ENCODE measurements at regions of chr5 and their contacts with region 1.

Region 1: GRCh38 chr5:132293066-132293991 is 865 bp upstream of the SLC22A4 start:
- DNase-seq: peak; percentile 92
- ATAC-seq: peak; percentile 54
- H3K4me3 Mint-ChIP-seq: peak overlapping the region; percentile 87
- H3K27ac Mint-ChIP-seq: peak overlapping the region; percentile 95
- H3K4me1 Mint-ChIP-seq: peaks cover 21% of the 10 kb centered on the region
- H3K27me3 Mint-ChIP-seq: peaks cover 8% of the 10 kb centered on the region
- CTCF ChIP-seq: no peak

Region 2: DNA sequence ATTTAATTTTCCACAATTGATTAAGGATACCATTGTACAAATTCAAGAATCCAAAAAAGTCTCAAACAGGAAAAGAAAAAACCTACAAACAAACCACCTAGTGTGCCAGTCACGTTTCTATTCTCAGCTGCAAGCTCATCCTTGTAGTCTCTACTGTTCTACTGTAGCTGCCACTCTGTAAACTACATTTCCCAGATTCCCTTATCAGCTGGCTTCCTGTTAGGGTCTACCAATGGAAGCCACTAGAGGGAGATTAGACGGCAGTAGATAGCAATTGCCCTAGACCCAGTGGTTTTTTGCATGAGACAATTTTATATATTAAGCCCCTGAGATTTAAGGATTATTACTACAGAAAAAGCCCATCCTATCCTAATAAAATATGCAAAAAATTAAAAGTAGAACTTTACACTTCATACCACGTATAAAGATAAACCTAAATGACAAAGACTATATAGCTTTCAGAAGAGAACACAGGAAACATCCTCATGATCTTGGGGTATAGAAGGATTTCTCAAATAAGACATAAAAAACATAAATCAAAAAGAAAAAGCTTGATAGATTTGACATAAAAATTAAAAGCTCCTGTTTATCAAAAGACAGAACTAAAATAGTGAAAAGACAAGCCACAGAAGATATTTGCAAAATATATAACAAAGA is 103.0 kb before region 1 on chr5:
- CTCF ChIA-PET with region 1: interaction called, 10 read pairs
- POLR2A ChIA-PET with region 1: no interaction called
- intact Hi-C with region 1: no loop called
- DNase-seq: no peak
- ATAC-seq: peak; percentile 99
- H3K4me3 Mint-ChIP-seq: no peak overlapping the region
- H3K27ac Mint-ChIP-seq: no peak overlapping the region
- H3K4me1 Mint-ChIP-seq: peaks cover 3% of the 10 kb centered on the region
- H3K27me3 Mint-ChIP-seq: peaks cover 6% of the 10 kb centered on the region
- CTCF ChIP-seq: peak; percentile 69

Region 3: DNA sequence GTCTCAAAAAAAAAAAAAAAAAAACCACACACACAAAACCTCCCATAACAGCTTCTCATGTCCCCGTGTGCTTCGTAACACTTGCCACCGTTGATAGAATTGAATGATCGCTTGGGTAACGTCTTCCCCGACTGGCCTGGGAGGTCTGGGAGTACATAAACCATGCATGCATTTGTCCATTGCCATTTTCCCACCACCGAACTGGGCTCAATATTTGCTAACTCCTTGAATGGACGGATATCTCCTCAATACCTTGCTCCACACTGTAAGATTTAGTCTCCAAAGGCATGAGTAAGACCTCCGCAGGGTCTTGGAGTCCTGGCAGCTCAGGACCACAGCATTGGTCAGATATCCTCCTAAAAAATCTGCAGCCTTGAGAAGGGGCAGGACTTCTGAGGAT is 62.5 kb before region 1 on chr5:
- CTCF ChIA-PET with region 1: no interaction called
- POLR2A ChIA-PET with region 1: no interaction called
- intact Hi-C with region 1: no loop called
- DNase-seq: no peak
- ATAC-seq: no peak
- H3K4me3 Mint-ChIP-seq: no peak overlapping the region
- H3K27ac Mint-ChIP-seq: no peak overlapping the region
- H3K4me1 Mint-ChIP-seq: peaks cover under 1% of the 10 kb centered on the region
- H3K27me3 Mint-ChIP-seq: peaks cover 25% of the 10 kb centered on the region
- CTCF ChIP-seq: no peak

Region 4: GRCh38 chr5:132369474-132370180 is 76.3 kb after region 1 on chr5 and contains the start of gene SLC22A5:
- CTCF ChIA-PET with region 1: interaction called, 15 read pairs
- POLR2A ChIA-PET with region 1: interaction called, 7 read pairs
- intact Hi-C with region 1: no loop called
- DNase-seq: peak; percentile 73
- ATAC-seq: peak; percentile 96
- H3K4me3 Mint-ChIP-seq: peak within 1 kb of the TSS; percentile 82
- H3K27ac Mint-ChIP-seq: peak within 1 kb of the TSS; percentile 84
- H3K4me1 Mint-ChIP-seq: peaks cover 28% of the 10 kb centered on the region
- H3K27me3 Mint-ChIP-seq: no peaks in the 10 kb centered on the region
- CTCF ChIP-seq: no peak
- total RNA-seq, gene SLC22A5: 4.0 to 4.1 TPM

Region 5: DNA sequence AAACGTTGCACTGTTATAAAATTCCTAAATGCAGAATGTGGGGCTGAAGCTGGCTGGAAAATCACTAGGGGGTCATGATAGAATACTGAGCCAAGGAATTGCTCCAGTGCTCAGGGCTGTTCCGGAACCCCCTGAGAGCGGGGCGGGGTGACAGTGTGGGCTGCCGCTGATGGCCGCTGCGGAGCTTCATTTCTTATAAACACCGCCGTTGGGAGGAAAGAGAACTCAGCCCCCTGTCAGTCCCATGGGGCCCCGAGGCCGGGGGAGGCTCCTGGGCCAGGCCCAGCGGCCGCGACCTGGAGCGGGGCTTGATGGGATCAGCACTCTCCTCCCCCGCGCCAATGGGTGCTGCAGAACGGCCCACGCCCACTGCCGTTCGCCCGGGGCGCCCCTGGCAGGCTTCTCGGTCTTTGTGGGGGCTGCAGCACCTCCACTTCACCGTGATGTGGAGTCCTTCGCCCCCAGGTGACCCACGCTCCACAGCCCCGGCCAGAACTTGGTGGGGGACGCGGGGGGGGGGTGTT is 202.4 kb after region 1 on chr5:
- CTCF ChIA-PET with region 1: interaction called, 6 read pairs
- POLR2A ChIA-PET with region 1: interaction called, 12 read pairs
- intact Hi-C with region 1: no loop called
- DNase-seq: peak; percentile 94
- ATAC-seq: peak; percentile 60
- H3K4me3 Mint-ChIP-seq: peak overlapping the region; percentile 90
- H3K27ac Mint-ChIP-seq: peak overlapping the region; percentile 99
- H3K4me1 Mint-ChIP-seq: peaks cover 67% of the 10 kb centered on the region
- H3K27me3 Mint-ChIP-seq: no peaks in the 10 kb centered on the region
- CTCF ChIP-seq: no peak

Measured in activated CD8-positive, alpha-beta T cell treated with anti-CD3 and anti-CD28 coated beads for 36 hours (primary cell).